WTC11 (cell line): ENCODE measurements at regions of chr17 and their contacts with region 1.

Region 1: DNA sequence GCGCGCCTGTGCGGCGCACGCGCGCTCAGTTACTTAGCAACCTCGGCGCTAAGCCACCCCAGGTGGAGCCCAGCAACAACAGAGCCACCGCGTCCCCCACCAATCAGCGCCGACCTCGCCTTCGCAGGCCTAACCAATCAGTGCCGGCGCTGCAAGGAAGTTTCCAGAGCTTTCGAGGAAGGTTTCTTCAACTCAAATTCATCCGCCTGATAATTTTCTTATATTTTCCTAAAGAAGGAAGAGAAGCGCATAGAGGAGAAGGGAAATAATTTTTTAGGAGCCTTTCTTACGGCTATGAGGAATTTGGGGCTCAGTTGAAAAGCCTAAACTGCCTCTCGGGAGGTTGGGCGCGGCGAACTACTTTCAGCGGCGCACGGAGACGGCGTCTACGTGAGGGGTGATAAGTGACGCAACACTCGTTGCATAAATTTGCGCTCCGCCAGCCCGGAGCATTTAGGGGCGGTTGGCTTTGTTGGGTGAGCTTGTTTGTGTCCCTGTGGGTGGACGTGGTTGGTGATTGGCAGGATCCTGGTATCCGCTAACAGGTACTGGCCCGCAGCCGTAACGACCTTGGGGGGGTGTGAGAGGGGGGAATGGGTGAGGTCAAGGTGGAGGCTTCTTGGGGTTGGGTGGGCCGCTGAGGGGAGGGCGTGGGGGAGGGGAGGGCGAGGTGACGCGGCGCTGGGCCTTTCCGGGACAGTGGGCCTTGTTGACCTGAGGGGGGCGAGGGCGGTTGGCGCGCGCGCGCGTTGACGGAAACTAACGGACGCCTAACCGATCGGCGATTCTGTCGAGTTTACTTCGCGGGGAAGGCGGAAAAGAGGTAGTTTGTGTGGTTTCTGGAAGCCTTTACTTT is at the start of gene UBB:
- DNase-seq: peak; percentile 97
- ATAC-seq: peak; percentile 95
- H3K4me3 Mint-ChIP-seq: peak within 1 kb of the TSS; percentile 91
- H3K27ac Mint-ChIP-seq: peak within 1 kb of the TSS; percentile 98
- H3K4me1 Mint-ChIP-seq: peaks cover 25% of the 10 kb centered on the region
- H3K27me3 Mint-ChIP-seq: no peaks in the 10 kb centered on the region
- CTCF ChIP-seq: no peak
- total RNA-seq, gene UBB: 1,216 to 1,403 TPM (median 1,352 TPM) in 3 replicates

Region 2: GRCh38 chr17:16407911-16408588 is 27.2 kb after region 1 on chr17:
- CTCF ChIA-PET with region 1: interaction called, 4 read pairs
- POLR2A ChIA-PET with region 1: interaction called, 11 read pairs
- DNase-seq: peak; percentile 60
- ATAC-seq: peak; percentile 50
- H3K4me3 Mint-ChIP-seq: peak overlapping the region; percentile 51
- H3K27ac Mint-ChIP-seq: peak overlapping the region; percentile 91
- H3K4me1 Mint-ChIP-seq: peaks cover 11% of the 10 kb centered on the region
- H3K27me3 Mint-ChIP-seq: peaks cover 6% of the 10 kb centered on the region; the same call in 1 of the 2 replicates
- CTCF ChIP-seq: no peak

Region 3: GRCh38 chr17:16438557-16439302 is 57.9 kb after region 1 on chr17:
- CTCF ChIA-PET with region 1: interaction called, 12 read pairs
- POLR2A ChIA-PET with region 1: interaction called, 13 read pairs
- DNase-seq: peak; percentile 95
- ATAC-seq: peak; percentile 64
- H3K4me3 Mint-ChIP-seq: peak overlapping the region; percentile 99
- H3K27ac Mint-ChIP-seq: peak overlapping the region; percentile 100
- H3K4me1 Mint-ChIP-seq: peaks cover 66% of the 10 kb centered on the region
- H3K27me3 Mint-ChIP-seq: no peaks in the 10 kb centered on the region; the same call in 1 of the 2 replicates
- CTCF ChIP-seq: no peak